ENCODE measurements at regions of chr16 and their contacts with region 1.

Region 1: GRCh38 chr16:83952940-83953795 is at the start of gene OSGIN1:
- H3K4me3 ChIP-seq: peak within 1 kb of the TSS; percentile 32
- H3K27ac ChIP-seq: no peak within 1 kb of the TSS
- H3K4me1 ChIP-seq: no peaks in the 10 kb centered on the region; the same call in 1 of the 2 replicates
- CTCF ChIP-seq: no peak

Region 2: DNA sequence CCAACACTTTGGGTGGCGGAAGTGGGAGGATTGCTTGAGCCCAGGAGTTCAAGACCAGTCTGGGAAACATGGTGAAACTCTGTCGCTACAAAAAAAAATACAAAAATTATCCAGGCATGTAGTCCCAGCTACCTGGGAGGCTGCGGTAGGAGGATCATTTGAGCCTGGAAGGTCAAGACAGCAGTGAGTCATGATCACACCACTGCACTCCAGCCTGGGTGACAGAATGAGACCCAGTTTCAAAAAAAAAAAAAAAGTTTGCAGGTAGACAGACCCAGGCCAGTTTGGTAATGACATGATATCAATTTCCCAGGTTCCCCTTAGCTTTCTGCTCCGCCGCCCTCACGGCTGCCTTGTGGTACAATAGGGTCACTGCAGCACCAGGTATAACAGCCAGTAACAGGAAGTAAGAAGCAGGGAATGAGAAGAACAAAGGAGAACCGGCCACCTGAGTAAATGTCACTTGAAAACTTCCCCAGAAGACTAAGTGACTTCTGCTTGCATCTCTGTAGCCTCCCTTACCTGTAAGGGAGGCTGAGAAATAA is 346.6 kb before region 1 on chr16:
- CTCF ChIA-PET with region 1: no interaction called
- POLR2A ChIA-PET with region 1: no interaction called
- H3K4me3 ChIP-seq: no peak overlapping the region
- H3K27ac ChIP-seq: no peak overlapping the region
- H3K4me1 ChIP-seq: no peaks in the 10 kb centered on the region
- CTCF ChIP-seq: no peak

Region 3: GRCh38 chr16:83926726-83927397 is 26.3 kb before region 1 on chr16:
- CTCF ChIA-PET with region 1: interaction called, 18 read pairs
- POLR2A ChIA-PET with region 1: interaction called, 3 read pairs
- H3K4me3 ChIP-seq: peak overlapping the region; percentile 29
- H3K27ac ChIP-seq: no peak overlapping the region
- H3K4me1 ChIP-seq: no peaks in the 10 kb centered on the region
- CTCF ChIP-seq: peak; percentile 94

Region 4: DNA sequence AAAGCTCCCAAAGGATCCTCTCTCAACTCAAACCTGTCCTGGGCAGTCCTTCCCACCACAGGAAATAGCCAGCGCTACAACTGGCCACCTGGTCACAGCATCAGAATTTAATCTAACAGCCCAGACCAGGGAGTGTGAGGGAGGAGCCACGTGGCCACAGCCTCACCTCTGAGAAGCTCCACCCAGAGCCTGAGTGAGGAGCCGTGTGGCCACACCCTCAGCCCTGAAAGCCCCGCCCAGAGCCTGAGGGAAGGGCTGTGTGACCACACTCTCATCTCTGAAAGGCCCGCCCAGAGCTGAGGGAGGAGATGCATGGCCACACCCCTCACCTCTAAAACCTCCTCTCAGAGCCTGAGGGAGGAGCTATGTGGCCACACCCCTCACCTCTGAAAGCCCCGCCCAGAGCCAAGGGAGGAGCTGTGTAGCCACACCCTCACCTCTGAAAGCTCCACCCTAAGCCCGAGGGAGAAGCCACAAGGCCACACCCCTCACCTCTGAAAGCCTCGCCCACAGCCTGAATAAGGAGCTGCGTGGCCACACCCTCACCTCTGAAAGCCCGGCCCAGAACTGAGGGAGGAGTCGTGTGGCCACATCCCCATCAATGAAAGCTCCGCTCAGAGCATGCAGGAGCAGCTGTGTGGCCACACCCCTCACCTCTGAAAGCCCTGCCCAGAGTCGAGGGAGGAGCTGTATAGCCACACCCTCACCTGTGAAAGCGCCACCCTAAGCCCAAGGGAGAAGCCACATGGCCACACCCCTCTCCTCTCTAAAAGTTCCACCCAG is 60.8 kb after region 1 on chr16:
- CTCF ChIA-PET with region 1: interaction called, 10 read pairs
- POLR2A ChIA-PET with region 1: interaction called, 13 read pairs
- H3K4me3 ChIP-seq: no peak overlapping the region
- H3K27ac ChIP-seq: no peak overlapping the region
- H3K4me1 ChIP-seq: no peaks in the 10 kb centered on the region
- CTCF ChIP-seq: no peak

Region 5: GRCh38 chr16:84044118-84044488 is 90.9 kb after region 1 on chr16:
- CTCF ChIA-PET with region 1: interaction called, 20 read pairs
- POLR2A ChIA-PET with region 1: no interaction called
- H3K4me3 ChIP-seq: no peak overlapping the region
- H3K27ac ChIP-seq: no peak overlapping the region
- H3K4me1 ChIP-seq: peaks cover 7% of the 10 kb centered on the region
- CTCF ChIP-seq: 0 out of 2 replicates have a peak, but pooled peaks have one; percentile 19

Region 6: DNA sequence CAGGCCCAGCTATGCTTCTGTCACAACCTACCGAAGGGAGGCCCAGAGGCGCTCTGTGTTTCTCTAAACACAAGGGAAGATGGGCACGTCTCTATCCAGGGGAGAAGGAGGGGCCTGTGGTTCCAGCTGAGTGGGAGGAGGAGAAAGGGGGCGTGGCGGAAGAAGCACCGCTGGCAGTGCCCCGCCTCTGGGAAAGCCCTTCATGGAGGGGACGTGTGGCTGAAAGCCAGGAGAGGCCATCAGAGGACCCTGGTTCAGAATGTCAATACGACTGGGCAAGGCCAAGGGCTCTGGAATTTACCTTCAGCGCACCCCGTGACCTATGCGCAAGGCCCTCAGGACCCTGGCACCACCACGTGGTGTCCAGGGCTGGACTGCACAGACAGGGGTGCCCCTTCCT is 101.7 kb after region 1 on chr16:
- CTCF ChIA-PET with region 1: interaction called, 36 read pairs
- POLR2A ChIA-PET with region 1: no interaction called
- H3K4me3 ChIP-seq: no peak overlapping the region
- H3K27ac ChIP-seq: no peak overlapping the region
- H3K4me1 ChIP-seq: no peaks in the 10 kb centered on the region
- CTCF ChIP-seq: no peak

Measured in HEK293 (cell line).